Lower lobe of right lung (tissue), 2 donors: ENCODE measurements at regions of chr7 and their contacts with region 1.

Region 1: GRCh38 chr7:101099969-101100781 is 14.9 kb downstream of the TRIM56 start:
- DNase-seq: peak; percentile 80
- ATAC-seq: peak; percentile 87 to 90
- H3K4me3 ChIP-seq: no peak overlapping the region
- H3K27ac ChIP-seq: no peak overlapping the region
- H3K4me1 ChIP-seq: peaks cover 28% of the 10 kb centered on the region
- H3K27me3 ChIP-seq: no peaks in the 10 kb centered on the region
- CTCF ChIP-seq: no peak

Region 2: GRCh38 chr7:101138213-101138870 is 38.2 kb after region 1 on chr7:
- intact Hi-C with region 1: loop called (anchors 5 kb)
- DNase-seq: peak; percentile 70
- ATAC-seq: peak; percentile 90
- H3K4me3 ChIP-seq: peak overlapping the region; percentile 19
- H3K27ac ChIP-seq: peak overlapping the region; percentile 56
- H3K4me1 ChIP-seq: peaks cover 14% of the 10 kb centered on the region
- H3K27me3 ChIP-seq: peaks cover 4% of the 10 kb centered on the region
- CTCF ChIP-seq: peak; percentile 82